Body of pancreas (tissue), 4 donors: ENCODE measurements at regions of chr19 and their contacts with region 1.

Region 1: DNA sequence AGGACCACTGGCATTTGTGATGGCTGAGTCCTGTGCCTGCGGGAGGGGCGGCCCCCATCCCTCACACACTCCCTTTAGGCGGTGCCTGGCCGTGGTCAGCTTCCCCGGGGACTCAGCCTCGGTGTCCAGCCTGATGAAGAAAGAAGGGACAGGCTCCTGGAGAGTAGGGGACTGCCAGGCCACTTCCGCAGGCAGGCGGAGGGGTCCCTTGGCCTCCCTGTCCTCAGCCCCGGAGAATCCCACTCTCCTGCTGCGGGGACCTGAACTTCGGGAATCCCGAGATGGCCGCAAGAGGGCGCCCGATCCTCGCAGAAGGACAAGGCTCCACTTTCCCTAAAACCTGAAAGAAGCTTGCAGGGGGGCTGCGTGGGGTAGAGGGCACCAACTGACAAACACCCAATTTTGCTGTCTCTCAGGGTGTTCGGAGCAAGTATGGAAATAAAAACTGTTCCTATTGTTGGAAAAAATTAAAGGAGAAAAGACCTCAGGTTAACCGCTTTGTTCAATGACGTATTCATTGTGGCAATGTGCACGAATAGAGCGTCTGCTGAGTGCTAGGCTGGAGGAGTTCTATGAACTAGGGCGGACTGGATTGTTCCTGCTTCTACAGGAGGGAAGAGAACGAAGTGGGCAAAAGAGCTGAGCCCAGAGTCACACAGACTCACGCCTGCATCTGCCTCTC is 297.3 kb downstream of the ZNF536 start:
- DNase-seq: peak; percentile 60 to 81 (median 76)
- ATAC-seq: no peak
- H3K4me3 ChIP-seq: no peak overlapping the region
- H3K27ac ChIP-seq: no peak overlapping the region
- H3K4me1 ChIP-seq: peaks cover 35% of the 10 kb centered on the region
- H3K27me3 ChIP-seq: no peaks in the 10 kb centered on the region
- CTCF ChIP-seq: peak; percentile 61 to 80 (median 68)
- POLR2A ChIP-seq: no peak

Region 2: DNA sequence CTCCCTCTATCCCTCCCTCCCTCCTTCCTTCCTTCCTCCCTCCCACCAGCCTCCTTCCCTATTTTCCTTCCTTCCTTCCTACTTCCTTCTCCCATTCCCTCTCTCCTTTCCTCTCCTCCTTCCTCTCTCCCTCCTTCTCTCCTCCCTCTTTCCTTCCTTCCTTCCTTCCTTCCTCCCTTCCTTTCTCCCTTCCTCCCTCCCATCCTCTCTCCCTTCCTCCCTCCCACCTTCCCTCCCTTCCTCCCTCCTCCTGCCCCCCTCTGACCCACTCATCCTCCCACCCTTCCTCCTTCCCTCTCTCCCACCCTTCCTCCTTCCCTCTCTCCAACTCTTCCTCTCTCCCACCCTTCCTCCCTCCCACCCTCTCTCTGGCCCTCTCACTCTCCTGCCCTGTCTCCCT is 165.2 kb before region 1 on chr19:
- intact Hi-C with region 1: no loop called
- DNase-seq: no peak
- ATAC-seq: no peak
- H3K4me3 ChIP-seq: no peak overlapping the region
- H3K27ac ChIP-seq: no peak overlapping the region
- H3K4me1 ChIP-seq: no peaks in the 10 kb centered on the region
- H3K27me3 ChIP-seq: no peaks in the 10 kb centered on the region
- CTCF ChIP-seq: no peak
- POLR2A ChIP-seq: no peak

Region 3: GRCh38 chr19:30621326-30621920 is 48.0 kb before region 1 on chr19:
- intact Hi-C with region 1: no loop called
- DNase-seq: no peak
- ATAC-seq: no peak
- H3K4me3 ChIP-seq: no peak overlapping the region
- H3K27ac ChIP-seq: no peak overlapping the region
- H3K4me1 ChIP-seq: no peaks in the 10 kb centered on the region
- H3K27me3 ChIP-seq: no peaks in the 10 kb centered on the region
- CTCF ChIP-seq: no peak
- POLR2A ChIP-seq: no peak

Region 4: GRCh38 chr19:31350701-31351068 is 681.2 kb after region 1 on chr19:
- intact Hi-C with region 1: loop called (anchors 10 kb)
- DNase-seq: peak; percentile 46 to 62 (median 55)
- ATAC-seq: peak; percentile 73
- H3K4me3 ChIP-seq: peak overlapping the region; percentile 51 to 94
- H3K27ac ChIP-seq: peak overlapping the region; percentile 47 to 73 (median 64)
- H3K4me1 ChIP-seq: peaks cover 25% of the 10 kb centered on the region
- H3K27me3 ChIP-seq: peaks cover 0 to 8% of the 10 kb centered on the region in 2 donors
- CTCF ChIP-seq: no peak
- POLR2A ChIP-seq: no peak